ENCODE measurements at regions of chr4 and their contacts with region 1.

Region 1: GRCh38 chr4:118888666-118889311 is at the start of gene SYNPO2:
- DNase-seq: peak; percentile 50 to 85
- H3K4me3 ChIP-seq: peak within 1 kb of the TSS; percentile 32 to 61 (median 42); a peak in 7 of 8 replicates
- H3K27ac ChIP-seq: no peak within 1 kb of the TSS
- H3K4me1 ChIP-seq: peaks cover 0 to 3% (median 1%) of the 10 kb centered on the region in 4 experiments; a peak in 3 of 7 replicates
- H3K27me3 ChIP-seq: no peaks in the 10 kb centered on the region
- CTCF ChIP-seq: 0 out of 4 replicates have a peak, but pooled peaks of 1 of the 3 experiments have one; percentile 1
- EP300 ChIP-seq: no peak
- POLR2A ChIP-seq: 0 out of 3 replicates have a peak, but pooled peaks of 1 of the 2 experiments have one; percentile 32
- RAD21 ChIP-seq: peak; percentile 10 to 30; a peak in 2 of 4 replicates
- total RNA-seq, gene SYNPO2: 4.2 and 4.5 TPM in 2 replicates

Region 2: GRCh38 chr4:118772081-118772766 is 116.6 kb before region 1 on chr4:
- CTCF ChIA-PET with region 1: interaction called, 17 read pairs
- POLR2A ChIA-PET with region 1: interaction called, 6 read pairs
- DNase-seq: no peak
- H3K4me3 ChIP-seq: no peak overlapping the region
- H3K27ac ChIP-seq: no peak overlapping the region
- H3K4me1 ChIP-seq: peaks cover 0 to 7% (median 4%) of the 10 kb centered on the region in 4 experiments; a peak in 3 of 7 replicates
- H3K27me3 ChIP-seq: no peaks in the 10 kb centered on the region
- CTCF ChIP-seq: peak in 2 of 3 experiments; percentile 19 to 34; a peak in 2 of 4 replicates
- EP300 ChIP-seq: no peak
- POLR2A ChIP-seq: no peak
- RAD21 ChIP-seq: peak in 1 of 2 experiments; percentile 82

Region 3: DNA sequence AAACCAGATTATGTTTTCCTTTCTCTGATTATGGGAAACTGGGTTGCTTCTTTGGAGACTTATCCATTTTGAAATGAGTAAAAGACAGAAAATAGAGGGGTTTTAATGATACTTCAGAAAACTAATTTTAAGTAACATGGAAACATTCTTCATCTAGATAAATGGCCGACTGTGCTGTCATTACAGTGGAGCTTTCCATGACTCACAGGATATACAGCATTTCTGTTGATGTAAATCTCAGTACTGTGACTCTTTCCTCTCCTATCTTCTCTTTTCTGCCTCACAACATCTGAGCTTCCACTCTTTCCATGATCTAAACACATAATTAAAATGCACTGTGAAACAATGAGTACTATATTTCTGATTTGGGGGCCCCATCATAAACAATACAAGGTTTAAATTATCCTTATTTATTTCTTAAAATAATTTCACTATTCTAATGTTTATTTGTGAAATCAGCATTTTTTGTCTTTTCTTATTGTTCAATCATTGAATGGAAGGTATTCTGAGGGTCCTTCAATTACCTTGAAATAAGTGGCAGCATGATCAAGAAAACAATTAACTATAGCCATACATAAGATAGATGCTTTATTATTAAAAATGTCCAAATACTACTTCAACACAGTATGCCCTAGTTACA is 72.1 kb before region 1 on chr4:
- CTCF ChIA-PET with region 1: interaction called, 14 read pairs
- POLR2A ChIA-PET with region 1: no interaction called
- DNase-seq: no peak
- H3K4me3 ChIP-seq: no peak overlapping the region
- H3K27ac ChIP-seq: no peak overlapping the region
- H3K4me1 ChIP-seq: no peaks in the 10 kb centered on the region
- H3K27me3 ChIP-seq: no peaks in the 10 kb centered on the region
- CTCF ChIP-seq: no peak
- EP300 ChIP-seq: no peak
- POLR2A ChIP-seq: no peak
- RAD21 ChIP-seq: no peak

Region 4: GRCh38 chr4:118865091-118865708 is 23.6 kb before region 1 on chr4:
- CTCF ChIA-PET with region 1: interaction called, 15 read pairs
- POLR2A ChIA-PET with region 1: no interaction called
- DNase-seq: no peak
- H3K4me3 ChIP-seq: no peak overlapping the region
- H3K27ac ChIP-seq: no peak overlapping the region
- H3K4me1 ChIP-seq: peaks cover 0 to 9% (median 7%) of the 10 kb centered on the region in 4 experiments; a peak in 5 of 7 replicates
- H3K27me3 ChIP-seq: no peaks in the 10 kb centered on the region
- CTCF ChIP-seq: peak; percentile 28 to 85 (median 74)
- EP300 ChIP-seq: no peak
- POLR2A ChIP-seq: no peak
- RAD21 ChIP-seq: peak; percentile 65 to 76

Region 5: GRCh38 chr4:118911238-118911703 is 22.5 kb after region 1 on chr4:
- CTCF ChIA-PET with region 1: interaction called, 12 read pairs
- POLR2A ChIA-PET with region 1: interaction called, 3 read pairs
- DNase-seq: no peak
- H3K4me3 ChIP-seq: no peak overlapping the region
- H3K27ac ChIP-seq: no peak overlapping the region
- H3K4me1 ChIP-seq: no peaks in the 10 kb centered on the region
- H3K27me3 ChIP-seq: no peaks in the 10 kb centered on the region; a peak in 1 of 7 replicates
- CTCF ChIP-seq: no peak
- EP300 ChIP-seq: no peak
- POLR2A ChIP-seq: no peak
- RAD21 ChIP-seq: no peak

Measured in H1 (cell line).